Naive thymus-derived CD4-positive, alpha-beta T cell (primary cell): ENCODE measurements at regions of chr4 and their contacts with region 1.

Region 1: DNA sequence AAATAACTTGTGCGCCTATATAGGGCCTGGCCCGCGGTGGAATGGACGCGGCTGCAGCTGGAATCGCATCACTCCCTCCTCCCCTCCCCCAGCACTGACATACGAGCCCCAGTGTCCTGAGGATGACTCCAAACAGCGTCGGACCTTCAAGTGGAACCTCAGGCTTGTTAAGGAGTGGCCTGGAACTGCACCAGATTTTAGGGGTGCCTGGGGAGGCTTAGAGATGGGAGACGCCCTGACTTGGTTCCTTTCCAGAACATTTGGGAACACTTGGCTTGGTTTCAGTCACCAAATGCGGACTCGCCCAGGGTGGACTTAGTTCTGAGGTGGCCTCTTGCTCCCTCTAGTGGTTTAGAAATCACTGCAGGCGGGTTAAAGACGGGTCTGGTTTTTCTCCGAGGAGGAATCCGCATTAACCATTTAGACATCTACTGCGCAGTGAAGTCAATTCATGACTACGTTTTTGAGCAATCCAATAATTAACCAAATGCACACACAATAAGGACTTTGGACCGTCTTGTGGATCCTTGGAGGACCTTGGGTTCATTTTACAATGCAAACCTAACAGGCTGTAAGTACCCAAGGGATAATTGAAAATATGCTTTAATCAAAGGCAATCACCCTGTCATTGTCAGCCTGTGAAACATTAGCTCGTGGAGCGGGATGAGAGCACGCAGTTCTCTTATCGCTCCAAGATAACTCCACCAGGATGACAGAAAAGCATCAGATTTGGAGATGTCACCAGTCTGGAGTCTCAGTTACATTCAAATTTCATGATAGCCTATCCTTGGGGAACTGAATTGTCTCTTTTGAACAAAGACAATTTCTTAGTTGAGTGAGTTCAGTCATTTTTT is 11.2 kb upstream of the PDGFRA start:
- DNase-seq: peak in 8 of 9 donors; percentile 35 to 73 (median 58)
- ATAC-seq: peak; percentile 83
- H3K4me3 ChIP-seq: no peak overlapping the region
- H3K4me3 Mint-ChIP-seq: peak overlapping the region in 8 of 10 donors; percentile 29 to 56 (median 50)
- H3K27ac ChIP-seq: no peak overlapping the region
- H3K27ac Mint-ChIP-seq: no peak overlapping the region
- H3K4me1 ChIP-seq: peaks cover 0 to 5% of the 10 kb centered on the region in 2 donors
- H3K4me1 Mint-ChIP-seq: peaks cover 0 to 7% (median 5%) of the 10 kb centered on the region in 7 donors
- H3K27me3 ChIP-seq: peaks cover 0 to 3% of the 10 kb centered on the region in 2 donors
- H3K27me3 Mint-ChIP-seq: peaks cover 27 to 60% (median 43%) of the 10 kb centered on the region in 5 donors

Region 2: DNA sequence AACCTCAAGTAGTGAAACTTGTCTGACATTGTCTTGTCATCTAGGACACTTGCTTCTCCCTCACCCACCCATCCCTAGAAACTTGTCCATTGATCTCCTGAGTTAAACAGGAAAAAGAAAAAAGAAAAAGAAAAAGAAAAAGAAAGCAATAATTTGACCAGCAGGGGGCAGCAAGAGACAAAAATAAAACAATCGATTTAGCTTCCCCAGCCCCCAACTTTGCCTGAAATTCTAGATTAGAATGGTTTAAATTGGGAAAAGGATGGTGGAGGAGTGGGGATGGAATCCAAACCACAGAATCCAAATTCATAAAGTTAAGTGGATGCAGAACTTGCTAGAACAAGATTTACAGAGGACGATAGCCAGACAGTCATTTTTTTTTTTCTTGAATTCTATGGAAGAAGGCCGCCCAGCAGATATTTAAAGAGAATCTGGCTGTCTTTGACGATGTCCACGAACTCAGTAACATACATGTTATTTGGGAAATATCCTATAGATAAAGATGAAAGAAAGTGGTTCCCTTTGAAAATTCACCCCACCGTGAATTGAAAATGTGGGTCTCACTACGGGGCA is 1841.7 kb before region 1 on chr4:
- CTCF ChIA-PET with region 1: no interaction called
- POLR2A ChIA-PET with region 1: no interaction called
- intact Hi-C with region 1: loop called in 1 of 2 experiments (anchors 5 kb)
- DNase-seq: peak in 5 of 9 donors; percentile 17 to 25 (median 21)
- ATAC-seq: no peak
- H3K4me3 ChIP-seq: no peak overlapping the region
- H3K4me3 Mint-ChIP-seq: no peak overlapping the region
- H3K27ac ChIP-seq: no peak overlapping the region
- H3K27ac Mint-ChIP-seq: no peak overlapping the region
- H3K4me1 ChIP-seq: no peaks in the 10 kb centered on the region
- H3K4me1 Mint-ChIP-seq: peaks cover 0 to 3% (median 0%) of the 10 kb centered on the region in 7 donors
- H3K27me3 ChIP-seq: peaks cover 0 to 5% of the 10 kb centered on the region in 2 donors
- H3K27me3 Mint-ChIP-seq: peaks cover 8 to 34% (median 15%) of the 10 kb centered on the region in 5 donors

Region 3: GRCh38 chr4:53908661-53909078 is 309.2 kb before region 1 on chr4:
- CTCF ChIA-PET with region 1: interaction called, 3 read pairs
- POLR2A ChIA-PET with region 1: no interaction called
- intact Hi-C with region 1: loop called (anchors 1 kb)
- DNase-seq: peak in 4 of 9 donors; percentile 6 to 28 (median 18)
- ATAC-seq: peak; percentile 82
- H3K4me3 ChIP-seq: no peak overlapping the region
- H3K4me3 Mint-ChIP-seq: peak overlapping the region in 4 of 10 donors; percentile 9 to 45 (median 30)
- H3K27ac ChIP-seq: no peak overlapping the region
- H3K27ac Mint-ChIP-seq: no peak overlapping the region
- H3K4me1 ChIP-seq: no peaks in the 10 kb centered on the region
- H3K4me1 Mint-ChIP-seq: peaks cover 0 to 20% (median 12%) of the 10 kb centered on the region in 7 donors
- H3K27me3 ChIP-seq: no peaks in the 10 kb centered on the region
- H3K27me3 Mint-ChIP-seq: peaks cover 32 to 60% (median 48%) of the 10 kb centered on the region in 5 donors